Gastrocnemius medialis (tissue), 4 donors: ENCODE measurements at regions of chr21 and their contacts with region 1.

Region 1: DNA sequence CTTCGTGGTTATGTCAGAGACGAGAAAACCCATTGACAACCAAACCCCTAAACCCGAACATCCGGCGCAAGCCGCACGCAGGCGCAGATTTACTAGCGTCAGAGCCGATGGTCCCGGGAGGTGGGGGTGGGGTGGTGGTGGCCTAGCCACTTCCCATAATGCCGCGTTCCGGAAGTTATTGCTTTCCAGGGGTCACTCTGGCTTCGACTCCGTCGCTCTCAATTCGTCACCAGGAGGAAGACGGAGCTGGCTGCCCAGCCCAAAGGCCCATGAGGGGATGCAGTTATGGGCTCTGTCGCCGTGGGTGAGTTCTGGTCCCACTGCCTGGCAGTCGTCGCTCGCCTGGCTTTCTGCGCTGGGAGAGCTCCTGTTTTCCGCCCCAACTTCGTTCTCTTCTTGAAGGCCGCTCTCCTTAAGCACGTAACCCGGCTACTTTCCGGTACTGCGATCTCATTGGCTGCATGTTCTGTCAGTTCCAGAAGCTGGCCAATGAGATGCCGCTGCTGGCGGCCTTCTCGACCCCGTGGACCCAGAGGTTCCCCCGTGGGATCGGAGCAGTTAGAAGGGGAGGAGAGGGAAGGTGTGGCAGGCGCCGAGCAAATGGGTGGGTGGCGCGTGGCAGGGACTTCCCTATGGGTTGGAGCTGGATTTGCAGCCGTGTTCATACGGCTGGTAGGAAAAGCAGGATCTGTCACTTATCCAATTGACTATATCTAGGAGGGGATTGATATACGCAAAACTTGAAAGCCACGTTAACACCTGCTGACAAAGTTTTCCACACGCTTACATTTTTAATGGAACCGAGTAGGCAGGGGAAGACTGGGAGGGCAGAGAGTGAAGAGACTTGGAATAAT is at the start of gene USP16:
- DNase-seq: peak; percentile 96 to 98
- ATAC-seq: peak; percentile 99 to 100
- H3K4me3 ChIP-seq: peak within 1 kb of the TSS; percentile 66 to 87 (median 79)
- H3K27ac ChIP-seq: peak within 1 kb of the TSS; percentile 95 to 99 (median 97)
- H3K4me1 ChIP-seq: peaks cover 19 to 28% of the 10 kb centered on the region in 2 donors
- H3K27me3 ChIP-seq: no peaks in the 10 kb centered on the region
- CTCF ChIP-seq: peak in 4 of 5 experiments; percentile 35 to 45 (median 41)
- POLR2A ChIP-seq: peak; percentile 37 to 41
- total RNA-seq, gene USP16: 25.0 to 37.2 (median 32.1) TPM

Region 2: DNA sequence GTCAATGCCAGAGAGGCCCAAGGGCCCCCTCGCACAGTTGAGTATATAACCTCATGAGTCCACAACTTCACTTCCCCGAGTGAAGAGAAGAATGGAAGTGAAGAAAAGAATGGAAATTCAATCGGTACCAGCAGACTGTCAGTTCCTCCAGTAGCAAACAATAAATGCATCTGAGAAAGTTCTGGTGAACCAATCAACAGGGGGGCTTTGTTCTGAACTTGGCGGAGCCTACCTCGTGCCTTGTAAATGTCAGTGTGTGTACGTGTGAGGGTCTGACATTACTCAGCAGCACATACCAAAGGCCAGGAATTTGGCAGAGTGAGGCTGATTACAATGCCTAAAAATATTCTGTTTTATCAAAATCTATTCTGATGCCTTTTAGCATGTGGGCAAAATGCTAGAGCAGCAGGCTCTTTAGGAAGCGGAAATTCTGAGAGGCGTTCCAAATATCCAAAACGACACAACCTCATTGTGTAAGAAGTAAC is 270.5 kb before region 1 on chr21:
- in situ Hi-C with region 1: no loop called
- intact Hi-C with region 1: no loop called
- DNase-seq: no peak
- ATAC-seq: peak; percentile 57 to 64
- H3K4me3 ChIP-seq: no peak overlapping the region
- H3K27ac ChIP-seq: peak overlapping the region; percentile 20 to 66 (median 56)
- H3K4me1 ChIP-seq: peaks cover 14 to 18% of the 10 kb centered on the region in 2 donors
- H3K27me3 ChIP-seq: no peaks in the 10 kb centered on the region
- CTCF ChIP-seq: no peak
- POLR2A ChIP-seq: no peak

Region 3: GRCh38 chr21:29002442-29003144 is 22.1 kb before region 1 on chr21:
- in situ Hi-C with region 1: no loop called
- intact Hi-C with region 1: loop called (anchors 1 kb)
- DNase-seq: peak; percentile 95 to 97
- ATAC-seq: peak; percentile 100
- H3K4me3 ChIP-seq: peak overlapping the region; percentile 67 to 86 (median 74)
- H3K27ac ChIP-seq: peak overlapping the region; percentile 92 to 94 (median 93)
- H3K4me1 ChIP-seq: peaks cover 0 to 4% of the 10 kb centered on the region in 2 donors
- H3K27me3 ChIP-seq: no peaks in the 10 kb centered on the region
- CTCF ChIP-seq: no peak
- POLR2A ChIP-seq: peak; percentile 89 to 94

Region 4: DNA sequence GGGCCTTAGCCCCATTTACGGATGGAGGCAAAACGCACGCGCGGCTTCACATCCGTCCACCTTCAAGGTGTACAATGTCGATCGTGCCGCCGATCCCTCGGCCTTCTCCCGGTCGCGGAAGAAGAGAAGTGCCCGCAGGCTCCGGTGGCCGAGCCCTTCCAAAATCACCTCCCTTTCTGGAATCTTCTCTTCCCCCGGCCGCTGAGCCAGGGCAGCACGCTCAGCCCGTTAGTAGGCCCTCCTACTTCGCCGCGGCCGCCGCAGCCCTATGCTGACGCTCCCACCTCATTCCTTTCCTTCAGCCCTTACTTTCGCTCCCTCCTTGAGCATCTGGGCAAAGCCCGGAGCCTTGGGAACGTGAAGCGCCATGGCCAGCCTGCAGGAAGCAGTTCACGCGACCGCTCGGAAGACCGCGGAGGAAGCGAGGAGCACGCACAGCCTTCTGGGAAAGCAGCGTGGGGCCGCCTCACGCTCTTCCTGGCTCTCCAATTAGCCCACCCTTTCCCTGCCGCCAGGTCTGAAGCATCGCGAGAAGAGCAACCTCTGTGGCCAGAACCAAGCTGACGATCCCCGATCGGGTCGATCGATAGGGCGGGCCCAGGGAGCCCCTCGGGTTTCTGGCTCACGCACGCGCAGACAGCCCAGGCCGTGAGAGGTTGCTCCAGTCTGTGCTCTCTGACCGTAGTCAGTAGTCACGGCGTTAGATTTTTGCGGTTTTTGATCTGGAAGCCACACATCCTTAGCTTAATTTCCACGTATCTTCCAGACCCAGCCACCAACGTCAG is 48.7 kb after region 1 on chr21 and contains the start of gene CCT8:
- in situ Hi-C with region 1: no loop called
- intact Hi-C with region 1: loop called (anchors 1 kb)
- DNase-seq: peak; percentile 99
- ATAC-seq: peak; percentile 97
- H3K4me3 ChIP-seq: peak within 1 kb of the TSS; percentile 89 to 100 (median 100)
- H3K27ac ChIP-seq: peak within 1 kb of the TSS; percentile 94 to 99 (median 98)
- H3K4me1 ChIP-seq: peaks cover 27 to 29% of the 10 kb centered on the region in 2 donors
- H3K27me3 ChIP-seq: no peaks in the 10 kb centered on the region
- CTCF ChIP-seq: peak in 1 of 5 experiments; percentile 15
- POLR2A ChIP-seq: peak; percentile 71 to 83
- total RNA-seq, gene CCT8: 91.8 to 119 (median 99.1) TPM